ENCODE measurements at regions of chr15 and their contacts with region 1.

Region 1: DNA sequence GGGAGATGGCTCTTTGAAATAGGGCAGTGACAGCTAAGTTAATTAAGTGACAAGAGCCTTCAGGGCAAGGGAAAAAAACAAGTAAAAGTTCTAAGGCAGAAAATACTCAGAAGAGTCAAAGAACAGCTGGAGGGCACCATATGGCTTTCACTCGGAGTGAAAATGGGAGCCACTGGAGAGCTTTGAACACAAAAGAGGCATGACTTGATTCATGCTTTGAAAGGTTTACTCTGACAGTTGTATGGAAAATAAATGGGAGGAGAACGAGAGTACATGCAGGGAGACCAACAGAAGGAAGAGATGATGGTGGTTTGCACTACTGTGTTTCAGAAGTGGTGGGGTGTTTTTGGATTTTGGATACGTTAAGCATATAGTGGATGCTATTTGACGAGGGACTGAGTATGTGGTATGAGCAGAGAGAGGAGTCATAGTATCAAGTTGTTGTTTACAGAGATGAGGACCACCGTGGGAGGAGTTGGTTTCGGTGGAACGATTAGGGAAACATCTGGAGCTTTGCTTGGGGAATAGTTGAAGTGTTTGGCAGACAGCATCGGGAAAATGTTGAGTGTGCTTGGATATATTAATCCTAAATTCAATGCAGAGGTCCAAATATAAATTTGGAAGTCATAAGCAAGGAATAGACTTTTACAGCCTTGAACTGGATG is 411.5 kb downstream of the GABRG3 start:
- DNase-seq: no peak

Region 2: DNA sequence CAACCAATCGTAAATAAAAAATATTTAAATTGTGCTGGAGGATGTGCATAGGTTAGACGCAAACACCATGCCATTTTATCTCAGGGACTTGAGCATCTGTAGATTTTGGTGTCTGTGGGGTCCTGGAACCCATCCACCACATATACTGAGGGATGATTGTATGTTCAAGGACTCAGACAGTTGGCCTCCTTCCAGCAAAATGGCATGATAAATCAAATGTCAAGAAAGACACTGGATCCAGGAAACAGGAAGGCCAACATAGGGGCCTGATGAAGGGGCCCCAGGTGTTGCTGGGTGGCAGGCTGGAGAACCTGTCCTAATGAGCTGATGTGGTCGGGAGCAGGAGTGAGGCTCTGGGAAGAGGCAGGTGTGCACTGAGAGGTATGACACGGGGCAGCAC is 122.0 kb before region 1 on chr15:
- intact Hi-C with region 1: no loop called
- DNase-seq: no peak

Region 3: GRCh38 chr15:27317736-27318135 is 64.8 kb before region 1 on chr15:
- intact Hi-C with region 1: loop called (anchors 10 kb)
- DNase-seq: no peak

Region 4: GRCh38 chr15:27412415-27412814 is 29.9 kb after region 1 on chr15:
- intact Hi-C with region 1: no loop called
- DNase-seq: no peak

Region 5: GRCh38 chr15:27448986-27449385 is 66.5 kb after region 1 on chr15:
- intact Hi-C with region 1: no loop called
- DNase-seq: no peak